WTC11 (cell line): ENCODE measurements at regions of chr17 and their contacts with region 1.

Region 1: DNA sequence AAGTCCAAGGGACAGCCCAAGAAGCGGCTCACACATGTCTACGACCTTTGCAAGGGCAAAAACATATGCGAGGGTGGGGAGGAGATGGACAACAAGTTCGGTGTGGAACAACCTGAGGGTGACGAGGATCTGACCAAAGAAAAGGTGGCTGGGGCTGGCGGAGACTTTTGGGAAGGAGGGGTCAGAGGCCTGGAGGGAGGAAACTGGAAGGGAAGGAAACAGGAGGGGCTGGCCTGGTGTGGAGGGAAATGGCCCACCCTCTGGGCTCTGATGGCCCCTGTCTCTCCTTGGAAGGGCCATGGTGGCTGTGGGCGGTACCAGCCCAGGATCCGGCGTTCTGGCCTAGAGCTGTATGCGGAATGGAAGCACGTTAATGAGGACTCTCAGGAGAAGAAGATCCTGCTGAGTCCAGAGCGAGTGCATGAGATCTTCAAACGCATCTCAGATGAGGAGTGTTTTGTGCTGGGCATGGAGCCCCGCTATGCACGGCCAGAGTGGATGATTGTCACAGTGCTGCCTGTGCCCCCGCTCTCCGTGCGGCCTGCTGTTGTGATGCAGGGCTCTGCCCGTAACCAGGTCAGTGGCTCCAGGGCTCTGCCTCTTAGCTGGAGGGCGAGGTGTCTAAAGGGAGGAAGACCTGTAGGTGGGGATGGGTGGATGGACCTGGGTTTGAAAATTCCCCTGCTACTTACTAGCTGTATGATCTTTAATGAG is 12.5 kb downstream of the POLR2A start:
- DNase-seq: no peak
- ATAC-seq: no peak
- H3K4me3 Mint-ChIP-seq: no peak overlapping the region
- H3K27ac Mint-ChIP-seq: peak overlapping the region; percentile 41; the same call in 1 of the 2 replicates
- H3K4me1 Mint-ChIP-seq: peaks cover 3% of the 10 kb centered on the region
- H3K27me3 Mint-ChIP-seq: no peaks in the 10 kb centered on the region
- CTCF ChIP-seq: no peak

Region 2: DNA sequence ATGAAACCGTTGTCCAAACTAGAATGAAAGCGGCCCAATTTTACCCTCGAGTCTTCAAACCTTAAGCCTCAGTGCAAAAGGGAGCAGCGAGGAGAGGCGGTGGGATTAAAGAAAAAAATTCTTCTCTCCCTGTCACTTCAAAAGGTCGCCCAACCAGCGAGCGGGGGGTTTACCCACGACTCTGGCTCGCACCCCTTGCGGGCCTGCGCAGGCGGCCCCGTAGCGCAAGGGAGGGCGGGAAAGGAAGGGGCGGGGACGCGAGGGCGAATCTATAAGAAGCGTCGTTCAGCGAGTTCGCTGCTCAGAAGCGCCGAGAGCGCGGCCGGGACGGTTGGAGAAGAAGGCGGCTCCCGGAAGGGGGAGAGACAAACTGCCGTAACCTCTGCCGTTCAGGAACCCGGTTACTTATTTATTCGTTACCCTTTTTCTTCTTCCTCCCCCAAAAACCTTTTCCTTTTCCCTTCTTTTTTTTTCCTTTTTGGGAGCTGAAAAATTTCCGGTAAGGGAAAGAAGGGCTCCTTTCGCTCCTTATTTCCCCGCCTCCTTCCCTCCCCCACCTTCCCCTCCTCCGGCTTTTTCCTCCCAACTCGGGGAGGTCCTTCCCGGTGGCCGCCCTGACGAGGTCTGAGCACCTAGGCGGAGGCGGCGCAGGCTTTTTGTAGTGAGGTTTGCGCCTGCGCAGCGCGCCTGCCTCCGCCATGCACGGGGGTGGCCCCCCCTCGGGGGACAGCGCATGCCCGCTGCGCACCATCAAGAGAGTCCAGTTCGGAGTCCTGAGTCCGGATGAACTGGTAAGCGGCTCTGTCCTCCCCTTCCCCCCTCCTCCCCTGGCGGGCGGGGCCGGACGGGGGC is 12.3 kb before region 1 on chr17 and contains the start of gene POLR2A:
- CTCF ChIA-PET with region 1: no interaction called
- POLR2A ChIA-PET with region 1: interaction called, 13 read pairs
- DNase-seq: peak; percentile 96
- ATAC-seq: peak; percentile 65
- H3K4me3 Mint-ChIP-seq: peak within 1 kb of the TSS; percentile 90
- H3K27ac Mint-ChIP-seq: peak within 1 kb of the TSS; percentile 99
- H3K4me1 Mint-ChIP-seq: peaks cover 60% of the 10 kb centered on the region
- H3K27me3 Mint-ChIP-seq: no peaks in the 10 kb centered on the region
- CTCF ChIP-seq: no peak
- total RNA-seq, gene POLR2A: 166 to 170 TPM (median 170 TPM) in 3 replicates